MCF 10A (cell line): ENCODE measurements at regions of chr4 and their contacts with region 1.

Region 1: GRCh38 chr4:143549928-143550327 is 36.4 kb downstream of the SMARCA5 start:
- DNase-seq: no peak
- H3K4me3 Mint-ChIP-seq: no peak overlapping the region
- H3K27ac Mint-ChIP-seq: no peak overlapping the region
- H3K4me1 Mint-ChIP-seq: no peaks in the 10 kb centered on the region
- H3K27me3 Mint-ChIP-seq: no peaks in the 10 kb centered on the region
- CTCF ChIP-seq: no peak

Region 2: DNA sequence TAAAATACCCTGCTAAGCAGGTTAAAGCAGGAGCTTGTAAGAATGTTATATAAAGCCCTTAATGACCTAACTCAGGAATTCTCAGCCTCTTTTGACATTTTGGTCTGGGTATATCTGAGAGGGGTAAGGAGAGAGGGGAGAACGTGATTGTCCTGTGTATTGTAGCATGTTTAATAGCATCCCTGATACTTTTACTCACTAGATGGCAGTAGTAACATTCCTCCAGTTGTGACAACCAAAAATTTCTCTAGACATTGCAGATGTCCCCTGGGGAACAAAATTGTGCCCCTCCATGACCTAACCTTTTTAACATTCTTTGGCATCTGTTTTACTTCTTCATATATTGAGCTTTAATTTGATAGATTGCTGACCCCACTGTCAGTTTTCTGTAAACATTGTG is 18.5 kb before region 1 on chr4:
- CTCF ChIA-PET with region 1: interaction called, 14 read pairs
- POLR2A ChIA-PET with region 1: no interaction called
- intact Hi-C with region 1: no loop called
- DNase-seq: peak; percentile 22
- H3K4me3 Mint-ChIP-seq: no peak overlapping the region
- H3K27ac Mint-ChIP-seq: peak overlapping the region; percentile 49
- H3K4me1 Mint-ChIP-seq: peaks cover 4% of the 10 kb centered on the region
- H3K27me3 Mint-ChIP-seq: no peaks in the 10 kb centered on the region
- CTCF ChIP-seq: peak; percentile 43

Region 3: DNA sequence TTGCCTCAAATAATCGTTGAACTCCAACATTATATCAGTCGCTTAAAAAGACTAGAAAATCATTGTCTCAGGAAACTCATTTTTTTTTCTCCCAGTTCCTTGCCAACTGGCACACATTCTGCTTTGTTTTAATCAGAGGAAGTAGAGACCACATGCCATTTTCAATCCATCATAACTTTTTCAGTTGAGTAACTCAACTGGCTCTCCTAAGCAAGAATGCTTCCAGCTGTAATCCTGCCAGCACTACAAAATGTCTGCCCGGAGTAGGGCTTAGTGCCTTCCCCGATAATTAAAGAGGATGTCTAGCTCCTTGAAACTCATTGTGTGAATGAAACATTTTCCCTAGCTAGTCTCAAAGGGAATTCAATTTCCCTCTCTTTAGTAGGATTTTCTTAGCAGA is 117.5 kb after region 1 on chr4:
- CTCF ChIA-PET with region 1: no interaction called
- POLR2A ChIA-PET with region 1: no interaction called
- intact Hi-C with region 1: no loop called
- DNase-seq: peak; percentile 74
- H3K4me3 Mint-ChIP-seq: no peak overlapping the region
- H3K27ac Mint-ChIP-seq: no peak overlapping the region
- H3K4me1 Mint-ChIP-seq: peaks cover 12% of the 10 kb centered on the region
- H3K27me3 Mint-ChIP-seq: peaks cover 18% of the 10 kb centered on the region
- CTCF ChIP-seq: no peak